ENCODE measurements at regions of chr13 and their contacts with region 1.

Region 1: GRCh38 chr13:99436686-99437416 is 64.4 kb upstream of the TM9SF2 start:
- DNase-seq: peak; percentile 98
- ATAC-seq: peak; percentile 30
- H3K4me3 Mint-ChIP-seq: peak overlapping the region; percentile 0
- H3K27ac Mint-ChIP-seq: peak overlapping the region; percentile 45
- H3K4me1 Mint-ChIP-seq: peaks cover 60% of the 10 kb centered on the region
- H3K27me3 Mint-ChIP-seq: peaks cover 2% of the 10 kb centered on the region

Region 2: DNA sequence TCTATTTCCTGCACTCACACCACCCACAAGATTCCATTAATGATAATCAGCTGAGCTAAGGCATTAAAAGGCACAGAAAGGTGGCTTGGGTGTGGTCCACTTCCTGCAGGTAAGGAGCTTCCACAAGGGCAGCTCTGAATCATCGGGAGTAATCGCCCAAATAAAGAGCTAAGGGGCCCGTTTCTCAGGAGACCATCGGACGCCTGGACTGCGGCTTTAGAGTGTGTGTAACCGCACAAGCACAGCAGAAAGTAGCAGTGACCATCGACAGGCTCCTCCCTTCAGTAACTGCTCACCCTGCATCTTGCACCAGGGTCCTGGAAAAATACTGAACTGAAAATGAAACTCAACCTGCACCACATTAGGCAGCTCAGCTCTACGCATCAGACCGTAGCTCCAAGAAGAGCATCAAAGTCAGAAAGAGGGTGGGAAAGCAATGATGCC is 865.9 kb before region 1 on chr13:
- CTCF ChIA-PET with region 1: no interaction called
- POLR2A ChIA-PET with region 1: no interaction called
- intact Hi-C with region 1: loop called in 1 of 2 experiments (anchors 5 kb)
- DNase-seq: peak; percentile 65
- ATAC-seq: peak; percentile 58
- H3K4me3 Mint-ChIP-seq: peak overlapping the region; percentile 75
- H3K27ac Mint-ChIP-seq: peak overlapping the region; percentile 73
- H3K4me1 Mint-ChIP-seq: peaks cover 87% of the 10 kb centered on the region
- H3K27me3 Mint-ChIP-seq: no peaks in the 10 kb centered on the region

Region 3: GRCh38 chr13:99200432-99201167 is 236.3 kb before region 1 on chr13 and contains the start of gene UBAC2:
- CTCF ChIA-PET with region 1: interaction called, 7 read pairs
- POLR2A ChIA-PET with region 1: interaction called, 7 read pairs
- intact Hi-C with region 1: loop called (anchors 1 to 2 kb)
- DNase-seq: peak; percentile 98
- ATAC-seq: peak; percentile 77
- H3K4me3 Mint-ChIP-seq: peak within 1 kb of the TSS; percentile 82
- H3K27ac Mint-ChIP-seq: peak within 1 kb of the TSS; percentile 97
- H3K4me1 Mint-ChIP-seq: peaks cover 62% of the 10 kb centered on the region
- H3K27me3 Mint-ChIP-seq: no peaks in the 10 kb centered on the region
- total RNA-seq, gene UBAC2: 48.4 to 56.3 TPM

Region 4: GRCh38 chr13:99296398-99296797 is 140.5 kb before region 1 on chr13:
- CTCF ChIA-PET with region 1: interaction called, 21 read pairs
- POLR2A ChIA-PET with region 1: interaction called, 9 read pairs
- intact Hi-C with region 1: loop called (anchors 2 kb)
- DNase-seq: no peak
- ATAC-seq: peak; percentile 54
- H3K4me3 Mint-ChIP-seq: peak overlapping the region; percentile 58
- H3K27ac Mint-ChIP-seq: peak overlapping the region; percentile 96
- H3K4me1 Mint-ChIP-seq: peaks cover 86% of the 10 kb centered on the region
- H3K27me3 Mint-ChIP-seq: no peaks in the 10 kb centered on the region

Region 5: DNA sequence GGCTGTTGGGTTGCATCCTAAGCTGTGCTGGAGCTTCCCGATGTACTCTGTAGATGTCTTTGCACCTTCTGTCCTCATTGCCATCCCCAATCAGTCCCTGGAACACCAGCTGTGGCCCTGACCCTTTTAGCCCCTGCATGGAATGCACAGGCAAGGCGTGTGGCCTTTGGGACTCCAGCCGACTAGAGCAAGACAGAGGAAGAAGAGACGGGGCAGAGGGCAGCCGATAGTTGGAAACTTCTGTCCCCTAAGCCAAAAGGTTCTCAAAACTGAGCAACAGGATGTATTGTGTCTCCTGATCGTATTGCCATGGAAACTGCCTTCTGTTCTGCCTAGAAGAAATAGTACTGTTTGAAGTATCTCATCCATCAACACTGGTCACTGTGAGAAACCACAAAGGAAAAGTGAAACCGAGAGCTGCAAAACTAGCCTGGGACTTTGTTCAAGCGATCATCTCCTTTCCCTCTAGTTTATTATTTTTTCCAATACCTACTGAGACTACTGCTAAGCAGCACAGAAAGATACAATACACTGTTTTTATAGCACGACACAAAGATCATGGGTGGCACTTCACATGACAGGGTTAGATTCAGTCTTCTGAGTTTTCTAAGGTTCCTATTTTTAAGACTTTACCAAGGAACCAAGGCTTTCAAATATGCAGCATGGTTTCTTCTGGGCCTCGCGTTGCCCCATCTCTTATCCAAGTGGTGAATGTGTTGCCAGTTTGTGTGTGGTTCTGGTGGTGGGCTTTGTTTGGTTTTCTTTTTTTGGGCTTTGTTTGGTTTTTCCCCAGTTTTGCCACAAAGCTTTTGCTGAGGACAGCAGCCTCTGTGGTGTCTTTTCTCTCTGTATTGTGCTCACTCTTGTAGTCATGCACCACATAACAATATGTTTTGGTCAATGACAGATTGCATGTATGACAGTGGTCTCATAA is 80.4 kb before region 1 on chr13:
- CTCF ChIA-PET with region 1: interaction called, 40 read pairs
- POLR2A ChIA-PET with region 1: interaction called, 18 read pairs
- intact Hi-C with region 1: loop called (anchors 1 kb)
- DNase-seq: peak; percentile 48
- ATAC-seq: peak; percentile 25
- H3K4me3 Mint-ChIP-seq: peak overlapping the region; percentile 42
- H3K27ac Mint-ChIP-seq: peak overlapping the region; percentile 92
- H3K4me1 Mint-ChIP-seq: peaks cover 99% of the 10 kb centered on the region
- H3K27me3 Mint-ChIP-seq: no peaks in the 10 kb centered on the region

Region 6: DNA sequence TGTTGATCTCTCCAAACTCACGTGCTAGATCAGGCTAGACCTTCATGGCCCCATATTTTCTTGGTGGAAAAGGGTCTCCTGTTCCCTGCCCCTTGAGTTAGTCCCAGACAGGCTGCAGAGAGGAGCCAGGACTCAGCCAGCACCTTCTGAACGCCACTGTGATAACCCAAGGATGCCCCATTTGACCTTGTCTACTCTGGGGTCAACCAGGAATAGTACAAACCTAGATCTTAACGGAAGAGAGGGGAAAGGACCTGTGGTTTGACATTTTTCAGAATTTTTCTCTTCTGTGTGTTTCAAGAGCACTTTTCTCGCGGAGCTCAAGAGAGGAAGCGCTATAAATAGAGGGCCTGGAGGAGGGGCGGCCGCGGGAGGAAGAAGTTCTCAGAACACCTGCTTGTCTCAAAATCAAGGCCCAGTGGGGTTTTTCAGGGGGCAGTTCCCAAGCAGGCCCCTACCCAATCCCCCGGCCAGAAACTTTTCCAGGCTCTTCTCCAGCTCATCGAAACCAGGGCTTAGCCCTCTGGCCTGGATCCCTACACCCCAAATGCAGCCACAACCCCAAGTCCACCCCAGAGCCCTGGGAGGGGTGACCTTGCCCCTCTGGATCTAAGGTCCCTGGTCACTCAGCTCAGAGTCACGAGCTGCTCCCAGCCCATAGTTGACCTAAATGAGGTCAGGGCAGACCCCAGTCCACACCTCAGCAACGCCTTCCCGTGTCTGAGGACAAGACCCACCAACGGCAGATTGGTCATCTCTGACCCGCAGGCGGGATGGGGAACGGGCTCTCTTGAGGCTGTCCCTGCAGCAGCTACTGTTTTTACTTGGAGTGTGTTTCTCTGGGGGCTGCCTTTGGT is 11.1 kb before region 1 on chr13:
- CTCF ChIA-PET with region 1: interaction called, 78 read pairs
- POLR2A ChIA-PET with region 1: interaction called, 13 read pairs
- intact Hi-C with region 1: loop called (anchors 1 kb)
- DNase-seq: peak; percentile 80
- ATAC-seq: peak; percentile 37
- H3K4me3 Mint-ChIP-seq: peak overlapping the region; percentile 65
- H3K27ac Mint-ChIP-seq: peak overlapping the region; percentile 93
- H3K4me1 Mint-ChIP-seq: peaks cover 67% of the 10 kb centered on the region
- H3K27me3 Mint-ChIP-seq: no peaks in the 10 kb centered on the region

Region 7: GRCh38 chr13:99566125-99567083 is 129.6 kb after region 1 on chr13:
- CTCF ChIA-PET with region 1: no interaction called
- POLR2A ChIA-PET with region 1: no interaction called
- intact Hi-C with region 1: no loop called
- DNase-seq: no peak
- ATAC-seq: no peak
- H3K4me3 Mint-ChIP-seq: no peak overlapping the region
- H3K27ac Mint-ChIP-seq: no peak overlapping the region
- H3K4me1 Mint-ChIP-seq: no peaks in the 10 kb centered on the region
- H3K27me3 Mint-ChIP-seq: no peaks in the 10 kb centered on the region